CD4-positive, alpha-beta memory T cell (primary cell): ENCODE measurements at regions of chr7 and their contacts with region 1.

Region 1: DNA sequence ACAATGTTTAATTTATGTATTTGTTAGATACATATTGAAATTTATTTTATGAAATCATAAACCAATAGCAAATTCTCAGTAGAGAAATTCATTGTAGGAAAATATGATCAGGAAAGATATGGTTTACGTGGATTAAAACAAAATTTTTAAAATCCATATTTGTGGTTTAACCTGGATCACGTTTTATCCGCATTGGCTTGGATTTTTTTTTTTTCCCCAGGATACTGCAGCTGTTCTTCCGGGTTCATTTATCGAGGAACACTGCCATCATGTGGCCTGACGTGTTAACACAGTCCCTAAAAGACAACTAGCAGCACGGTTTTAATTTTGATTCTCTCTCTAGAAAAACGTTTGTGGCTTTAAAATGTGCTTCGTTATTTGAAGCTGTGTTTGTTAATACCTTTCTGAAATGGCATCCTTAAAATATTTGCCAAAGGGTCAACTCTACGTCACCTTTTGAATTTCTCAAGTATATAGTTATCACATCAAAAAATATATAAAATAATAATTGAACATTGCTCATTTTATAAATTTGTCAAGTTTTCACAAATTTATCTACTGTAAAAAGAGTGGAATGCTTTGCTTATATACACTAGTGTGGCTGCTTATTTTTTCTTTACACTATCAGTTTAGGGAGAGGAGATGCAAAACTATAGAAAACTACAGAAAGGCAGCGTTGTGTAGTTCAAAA is 8.7 kb upstream of the ASB4 start:
- DNase-seq: peak; percentile 45 to 51 (median 48)
- H3K4me3 ChIP-seq: no peak overlapping the region
- H3K4me3 Mint-ChIP-seq: no peak overlapping the region
- H3K27ac ChIP-seq: no peak overlapping the region
- H3K27ac Mint-ChIP-seq: no peak overlapping the region
- H3K4me1 ChIP-seq: no peaks in the 10 kb centered on the region
- H3K4me1 Mint-ChIP-seq: no peaks in the 10 kb centered on the region
- H3K27me3 ChIP-seq: no peaks in the 10 kb centered on the region
- H3K27me3 Mint-ChIP-seq: no peaks in the 10 kb centered on the region

Region 2: DNA sequence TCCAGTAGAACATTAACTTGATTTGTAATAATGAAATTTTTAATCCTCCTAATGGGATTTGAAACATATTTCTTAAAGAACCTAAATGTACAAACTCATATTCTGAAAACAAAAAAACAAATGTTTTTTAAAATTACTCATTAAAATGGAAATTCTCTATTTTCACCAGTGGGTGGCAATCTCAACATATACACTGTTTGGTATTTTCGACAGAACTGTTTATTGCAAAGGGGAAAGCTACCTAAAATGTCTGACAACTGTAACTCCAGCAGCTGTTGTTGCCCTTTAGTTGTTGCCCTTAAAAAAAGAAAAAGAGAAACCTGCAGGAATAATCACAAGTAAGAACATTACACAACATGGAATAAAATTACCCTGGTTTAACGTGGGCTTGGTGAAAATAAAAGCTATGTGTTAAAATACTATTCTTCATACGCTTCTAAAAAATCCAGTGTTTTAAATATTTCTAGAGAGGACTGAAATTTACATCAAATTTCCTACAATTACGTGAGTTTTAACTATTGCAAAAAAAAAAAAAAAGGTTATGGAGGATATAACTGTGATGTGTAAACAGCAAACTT is 1027.8 kb before region 1 on chr7:
- CTCF ChIA-PET with region 1: interaction called, 95 read pairs
- POLR2A ChIA-PET with region 1: no interaction called
- intact Hi-C with region 1: no loop called
- DNase-seq: peak in 4 of 5 donors; percentile 21 to 26 (median 24)
- H3K4me3 ChIP-seq: no peak overlapping the region
- H3K4me3 Mint-ChIP-seq: peak overlapping the region in 1 of 8 donors; percentile 26
- H3K27ac ChIP-seq: no peak overlapping the region
- H3K27ac Mint-ChIP-seq: no peak overlapping the region
- H3K4me1 ChIP-seq: no peaks in the 10 kb centered on the region
- H3K4me1 Mint-ChIP-seq: no peaks in the 10 kb centered on the region
- H3K27me3 ChIP-seq: no peaks in the 10 kb centered on the region
- H3K27me3 Mint-ChIP-seq: peaks cover 4 to 11% of the 10 kb centered on the region in 2 donors

Region 3: DNA sequence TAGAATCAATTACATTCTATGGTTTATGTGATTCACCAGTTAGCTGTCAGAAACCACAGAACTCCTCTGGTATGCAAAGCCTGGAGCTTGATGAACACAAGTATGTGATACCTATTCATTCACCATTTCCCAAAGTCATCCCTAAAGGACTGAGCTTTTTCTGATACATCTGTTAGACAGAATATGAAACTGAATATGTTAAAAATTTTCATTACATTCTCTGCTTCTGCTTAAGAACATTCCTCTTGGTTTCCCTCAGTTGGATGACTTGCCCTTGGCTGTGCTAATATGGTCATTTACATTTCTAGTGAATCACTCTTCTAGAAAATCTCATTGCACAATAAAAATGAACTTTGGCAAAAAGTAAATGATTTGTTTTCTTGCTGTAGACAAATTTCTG is 142.0 kb before region 1 on chr7:
- CTCF ChIA-PET with region 1: no interaction called
- POLR2A ChIA-PET with region 1: no interaction called
- intact Hi-C with region 1: no loop called
- DNase-seq: no peak
- H3K4me3 ChIP-seq: no peak overlapping the region
- H3K4me3 Mint-ChIP-seq: no peak overlapping the region
- H3K27ac ChIP-seq: no peak overlapping the region
- H3K27ac Mint-ChIP-seq: no peak overlapping the region
- H3K4me1 ChIP-seq: peaks cover 3% of the 10 kb centered on the region
- H3K4me1 Mint-ChIP-seq: peaks cover 8 to 11% (median 9%) of the 10 kb centered on the region in 4 donors
- H3K27me3 ChIP-seq: no peaks in the 10 kb centered on the region
- H3K27me3 Mint-ChIP-seq: peaks cover 0 to 3% of the 10 kb centered on the region in 2 donors

Region 4: DNA sequence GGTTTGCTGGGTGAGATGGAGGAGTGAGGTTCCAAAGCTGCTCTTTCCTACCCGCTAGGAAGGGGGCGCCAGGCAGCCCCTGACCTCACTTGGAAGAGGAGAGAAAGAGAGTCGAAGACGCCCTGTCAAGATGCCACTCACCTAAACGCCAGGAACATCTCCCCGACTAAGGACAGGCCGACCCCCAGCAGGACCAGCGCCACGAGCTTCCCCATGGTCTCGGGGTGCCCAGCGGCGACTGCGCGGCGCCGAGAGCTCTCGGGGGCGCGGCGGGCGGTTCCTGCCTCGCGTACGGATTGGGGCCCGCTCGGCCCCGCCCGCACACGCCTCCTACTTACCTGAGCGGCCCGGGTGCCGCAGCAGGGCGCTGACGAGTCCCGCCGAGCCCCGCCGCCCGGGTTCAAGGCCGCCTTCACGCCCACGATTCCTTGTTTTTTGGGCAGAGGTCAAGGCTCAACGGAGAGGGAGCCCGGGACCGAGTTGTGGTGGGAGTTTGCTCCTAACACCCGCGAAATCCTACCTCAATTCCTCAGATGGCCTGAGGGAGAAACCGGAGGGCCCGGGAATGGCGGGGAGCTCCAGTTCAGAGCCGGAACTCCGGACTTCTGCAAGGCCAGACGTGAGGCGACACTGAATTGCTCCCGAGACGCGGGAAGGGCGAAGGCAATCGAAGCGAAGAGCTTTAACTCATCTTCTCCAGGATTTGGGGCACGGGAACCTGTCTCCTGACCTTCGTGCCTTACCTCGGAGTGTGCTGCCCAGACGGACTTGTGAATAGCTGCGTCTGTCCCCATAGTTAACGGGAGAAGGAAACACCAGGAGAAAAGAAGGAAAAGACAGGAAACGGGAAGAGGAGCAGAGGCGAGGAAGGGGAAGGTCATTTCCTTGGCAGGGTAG is 80.7 kb before region 1 on chr7 and contains the start of gene PON3:
- CTCF ChIA-PET with region 1: interaction called, 6 read pairs
- POLR2A ChIA-PET with region 1: no interaction called
- intact Hi-C with region 1: loop called (anchors 2 kb)
- DNase-seq: peak in 3 of 5 donors; percentile 3 to 14 (median 12)
- H3K4me3 ChIP-seq: no peak within 1 kb of the TSS
- H3K4me3 Mint-ChIP-seq: peak within 1 kb of the TSS; percentile 12 to 77 (median 58)
- H3K27ac ChIP-seq: no peak within 1 kb of the TSS
- H3K27ac Mint-ChIP-seq: no peak within 1 kb of the TSS
- H3K4me1 ChIP-seq: peaks cover 7% of the 10 kb centered on the region
- H3K4me1 Mint-ChIP-seq: peaks cover 0 to 4% (median 0%) of the 10 kb centered on the region in 4 donors
- H3K27me3 ChIP-seq: peaks cover 3% of the 10 kb centered on the region
- H3K27me3 Mint-ChIP-seq: peaks cover 11 to 21% of the 10 kb centered on the region in 2 donors
- total RNA-seq, gene PON3: not detected